ENCODE measurements at regions of chr11 and their contacts with region 1.

Region 1: GRCh38 chr11:124837491-124837856 is 27.8 kb upstream of the ROBO3 start:
- DNase-seq: peak; percentile 64
- H3K4me3 Mint-ChIP-seq: no peak overlapping the region
- H3K27ac Mint-ChIP-seq: no peak overlapping the region
- H3K4me1 Mint-ChIP-seq: peaks cover 13% of the 10 kb centered on the region
- H3K27me3 Mint-ChIP-seq: peaks cover 74% of the 10 kb centered on the region

Region 2: DNA sequence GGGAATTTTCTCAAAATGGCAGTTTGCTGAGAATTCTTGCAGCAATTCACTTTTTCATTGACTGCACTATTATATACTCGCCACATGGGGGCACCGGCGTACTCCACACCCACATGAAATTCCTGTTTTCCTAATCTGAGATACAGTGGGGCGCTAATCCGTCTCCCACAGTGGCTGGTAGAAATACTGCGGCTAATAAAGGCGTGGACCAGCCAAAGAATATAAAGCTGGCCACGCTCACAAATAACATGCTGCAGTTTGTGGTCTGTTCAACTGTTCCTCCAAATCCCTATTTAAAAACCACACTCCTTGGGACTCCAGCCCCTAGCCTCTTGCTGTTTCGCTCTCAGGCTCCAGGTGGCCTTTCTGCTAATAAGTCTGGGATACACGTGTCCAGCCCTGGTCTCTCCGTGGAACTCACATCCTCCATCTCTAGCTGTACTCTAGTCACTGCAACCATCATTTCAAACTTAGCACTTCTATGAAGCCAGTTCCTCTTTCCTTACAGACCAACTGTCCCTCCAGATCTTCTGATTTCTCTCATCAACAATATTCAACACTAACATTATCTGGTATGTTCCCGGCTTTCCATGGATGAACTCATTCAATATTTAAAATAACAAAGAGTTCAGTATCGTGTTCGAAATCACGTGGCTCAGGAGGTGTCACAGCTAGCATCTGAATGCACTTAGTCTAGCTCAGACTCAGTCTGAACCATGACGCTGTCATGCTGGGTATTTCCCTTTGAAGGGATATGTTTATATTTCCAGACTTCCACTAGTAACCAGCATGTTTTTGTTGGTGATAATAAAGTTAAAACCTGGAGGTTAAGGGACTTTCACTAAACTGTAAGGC is 192.8 kb before region 1 on chr11:
- intact Hi-C with region 1: loop called (anchors 1 kb)
- DNase-seq: peak; percentile 68
- H3K4me3 Mint-ChIP-seq: no peak overlapping the region
- H3K27ac Mint-ChIP-seq: no peak overlapping the region
- H3K4me1 Mint-ChIP-seq: no peaks in the 10 kb centered on the region
- H3K27me3 Mint-ChIP-seq: no peaks in the 10 kb centered on the region